Posterior cingulate gyrus (tissue), 11 donors: ENCODE measurements at regions of chr5 and their contacts with region 1.

Region 1: DNA sequence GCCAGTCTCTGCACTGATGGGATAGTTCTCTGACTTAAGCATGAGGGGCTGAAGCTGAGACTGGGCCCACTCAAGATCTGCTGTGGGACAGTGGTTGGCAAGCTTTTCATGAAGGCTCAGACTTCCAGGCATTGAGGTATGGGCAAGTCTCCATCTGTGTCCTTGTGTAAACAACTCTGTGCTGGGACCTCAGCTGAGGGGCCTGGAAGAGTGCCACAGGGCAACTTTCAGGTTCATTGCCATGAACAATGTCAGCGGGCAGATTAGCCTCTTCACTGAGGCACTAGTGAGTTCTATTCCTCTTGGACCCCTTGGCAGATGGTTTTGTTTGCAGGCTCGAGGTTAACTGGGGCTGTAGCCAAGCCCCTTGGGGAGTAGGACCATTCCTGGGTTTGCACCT is 127.1 kb downstream of the MRPS30 start:
- DNase-seq: peak in 2 of 10 donors; percentile 31 to 70

Region 2: DNA sequence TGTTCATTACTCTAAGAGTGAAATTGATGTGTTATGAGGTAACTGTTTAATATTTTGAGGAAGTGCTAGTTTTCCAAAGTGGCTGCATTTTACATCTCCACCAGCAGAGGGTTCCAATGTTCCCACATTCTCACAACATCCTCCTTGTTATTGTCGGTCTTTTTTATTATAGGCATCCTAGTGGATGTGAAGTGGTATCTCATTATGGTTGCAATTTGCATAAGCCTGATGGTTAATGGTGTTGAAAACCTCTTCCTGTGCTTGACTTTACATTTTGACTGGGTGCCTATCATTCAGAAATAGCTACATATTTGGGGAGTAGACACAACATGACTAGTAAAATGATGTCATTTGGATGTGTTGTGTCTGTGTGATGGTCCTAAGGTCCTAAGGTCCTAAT is 16.5 kb after region 1 on chr5:
- intact Hi-C with region 1: loop called (anchors 1 kb)
- DNase-seq: no peak

Region 3: DNA sequence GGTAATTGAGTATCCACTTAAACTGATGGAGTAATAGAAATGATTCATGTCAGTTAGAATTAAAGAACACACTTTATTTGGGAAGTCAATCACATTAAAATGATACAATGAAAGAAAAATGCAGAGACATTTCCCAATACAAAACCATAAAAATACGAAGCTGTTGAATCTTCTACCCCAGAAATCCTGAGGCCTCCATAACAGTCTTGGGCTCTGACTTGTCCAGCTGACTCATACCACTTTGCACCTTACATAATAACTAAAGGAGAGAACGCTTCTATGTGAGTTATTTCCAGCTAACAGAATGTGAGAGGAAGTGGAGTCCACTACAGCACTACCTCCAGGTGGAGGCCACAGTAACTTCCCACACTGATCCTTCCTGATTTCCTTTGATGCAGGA is 177.9 kb after region 1 on chr5:
- intact Hi-C with region 1: no loop called
- DNase-seq: no peak